Activated naive CD8-positive, alpha-beta T cell treated with anti-CD3 and anti-CD28 coated beads, Interleukin-2, amount 10 ng/mL, durations not matched to agents 7 days and 5 days (primary cell): ENCODE measurements at regions of chr20 and their contacts with region 1.

Region 1: GRCh38 chr20:52399352-52399751 is 207.8 kb upstream of the ZFP64 start:
- DNase-seq: no peak
- ATAC-seq: no peak
- H3K4me3 Mint-ChIP-seq: no peak overlapping the region
- H3K27ac Mint-ChIP-seq: peak overlapping the region; percentile 30
- H3K4me1 Mint-ChIP-seq: peaks cover 15% of the 10 kb centered on the region
- H3K27me3 Mint-ChIP-seq: no peaks in the 10 kb centered on the region

Region 2: DNA sequence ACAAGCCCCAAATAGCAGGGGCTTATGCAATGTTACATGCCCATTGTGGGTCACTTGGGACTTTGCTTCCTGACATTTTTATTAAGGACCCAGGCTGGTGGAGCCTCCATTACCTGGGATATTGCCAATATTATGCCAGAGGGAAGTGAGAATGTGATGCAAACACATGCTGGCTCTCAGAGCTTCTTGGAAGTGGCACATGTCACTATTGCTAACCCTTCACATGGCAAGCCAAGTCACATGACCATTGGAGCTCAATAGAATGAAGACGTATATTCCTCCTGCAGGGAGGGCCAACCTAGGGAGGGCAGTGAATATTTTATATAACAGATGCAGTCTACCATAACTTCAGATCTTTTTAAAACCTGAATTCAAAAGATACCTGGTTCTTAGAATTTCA is 67.1 kb before region 1 on chr20:
- POLR2A ChIA-PET with region 1: no interaction called
- DNase-seq: no peak
- ATAC-seq: no peak
- H3K4me3 Mint-ChIP-seq: no peak overlapping the region
- H3K27ac Mint-ChIP-seq: no peak overlapping the region
- H3K4me1 Mint-ChIP-seq: no peaks in the 10 kb centered on the region
- H3K27me3 Mint-ChIP-seq: peaks cover 1% of the 10 kb centered on the region

Region 3: GRCh38 chr20:52361650-52362049 is 37.7 kb before region 1 on chr20:
- POLR2A ChIA-PET with region 1: no interaction called
- DNase-seq: no peak
- ATAC-seq: no peak
- H3K4me3 Mint-ChIP-seq: no peak overlapping the region
- H3K27ac Mint-ChIP-seq: no peak overlapping the region
- H3K4me1 Mint-ChIP-seq: peaks cover 1% of the 10 kb centered on the region
- H3K27me3 Mint-ChIP-seq: no peaks in the 10 kb centered on the region

Region 4: GRCh38 chr20:52372169-52372568 is 27.2 kb before region 1 on chr20:
- POLR2A ChIA-PET with region 1: no interaction called
- DNase-seq: no peak
- ATAC-seq: no peak
- H3K4me3 Mint-ChIP-seq: no peak overlapping the region
- H3K27ac Mint-ChIP-seq: no peak overlapping the region
- H3K4me1 Mint-ChIP-seq: peaks cover 2% of the 10 kb centered on the region
- H3K27me3 Mint-ChIP-seq: peaks cover 3% of the 10 kb centered on the region

Region 5: DNA sequence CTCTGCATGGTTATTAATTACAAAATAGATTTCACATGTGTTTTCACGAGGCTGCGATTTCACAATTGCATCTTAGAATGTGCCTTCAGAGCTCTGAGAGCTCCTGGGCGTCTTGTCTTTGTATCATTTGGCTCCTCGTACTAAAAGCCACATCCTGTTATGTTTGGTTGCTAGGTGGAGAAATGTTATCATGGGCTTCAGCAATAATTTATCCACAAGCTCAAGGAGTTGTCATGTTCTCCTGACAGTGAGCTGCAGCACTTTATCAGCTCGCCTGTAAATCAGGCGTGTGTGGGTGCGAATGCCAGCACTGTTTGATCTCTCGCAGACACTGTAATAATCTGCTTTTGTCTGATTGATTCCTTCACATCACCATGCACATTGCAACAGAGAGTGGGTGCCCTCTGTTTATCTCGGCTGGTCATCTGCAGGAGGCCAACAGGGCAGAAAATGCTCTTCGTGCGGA is 10.9 kb after region 1 on chr20:
- POLR2A ChIA-PET with region 1: interaction called, 12 read pairs
- DNase-seq: peak; percentile 47
- ATAC-seq: peak; percentile 86
- H3K4me3 Mint-ChIP-seq: peak overlapping the region; percentile 75
- H3K27ac Mint-ChIP-seq: peak overlapping the region; percentile 91
- H3K4me1 Mint-ChIP-seq: peaks cover 36% of the 10 kb centered on the region
- H3K27me3 Mint-ChIP-seq: no peaks in the 10 kb centered on the region

Region 6: GRCh38 chr20:52425253-52425652 is 25.9 kb after region 1 on chr20:
- POLR2A ChIA-PET with region 1: no interaction called
- DNase-seq: no peak
- ATAC-seq: no peak
- H3K4me3 Mint-ChIP-seq: no peak overlapping the region
- H3K27ac Mint-ChIP-seq: no peak overlapping the region
- H3K4me1 Mint-ChIP-seq: no peaks in the 10 kb centered on the region
- H3K27me3 Mint-ChIP-seq: no peaks in the 10 kb centered on the region